Cardiac septum (tissue), 1 donor: ENCODE measurements at regions of chr18 and their contacts with region 1.

Region 1: DNA sequence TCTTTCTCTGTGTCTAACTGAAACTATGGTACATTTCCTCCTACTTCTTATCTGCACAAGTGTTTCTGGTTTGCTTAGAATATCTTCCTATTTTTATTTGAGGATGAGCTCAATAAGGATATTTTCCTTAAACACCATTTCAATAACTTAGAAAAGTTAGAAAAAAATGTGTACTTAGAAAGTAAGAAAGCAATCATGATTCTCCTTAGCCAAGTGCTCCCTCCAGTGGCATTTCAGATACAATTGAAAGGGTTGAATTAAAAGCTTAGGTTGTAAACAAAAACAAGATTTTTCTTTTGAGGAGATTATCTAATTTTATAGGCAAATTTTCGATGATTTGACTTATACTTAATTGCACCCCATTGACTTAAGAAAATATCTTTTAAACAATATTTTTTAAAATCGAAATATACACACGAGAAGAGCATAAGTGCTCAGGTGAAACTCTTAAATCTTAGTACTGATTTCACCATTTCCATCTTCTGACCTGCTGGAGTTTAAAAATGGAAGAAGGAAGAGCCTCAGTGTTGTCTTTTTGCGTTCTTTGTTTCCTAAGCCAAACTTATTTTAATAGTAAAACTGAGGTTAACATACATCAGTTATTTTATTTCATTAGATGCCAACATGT is 26.9 kb downstream of the C18orf63 start:
- DNase-seq: no peak

Region 2: DNA sequence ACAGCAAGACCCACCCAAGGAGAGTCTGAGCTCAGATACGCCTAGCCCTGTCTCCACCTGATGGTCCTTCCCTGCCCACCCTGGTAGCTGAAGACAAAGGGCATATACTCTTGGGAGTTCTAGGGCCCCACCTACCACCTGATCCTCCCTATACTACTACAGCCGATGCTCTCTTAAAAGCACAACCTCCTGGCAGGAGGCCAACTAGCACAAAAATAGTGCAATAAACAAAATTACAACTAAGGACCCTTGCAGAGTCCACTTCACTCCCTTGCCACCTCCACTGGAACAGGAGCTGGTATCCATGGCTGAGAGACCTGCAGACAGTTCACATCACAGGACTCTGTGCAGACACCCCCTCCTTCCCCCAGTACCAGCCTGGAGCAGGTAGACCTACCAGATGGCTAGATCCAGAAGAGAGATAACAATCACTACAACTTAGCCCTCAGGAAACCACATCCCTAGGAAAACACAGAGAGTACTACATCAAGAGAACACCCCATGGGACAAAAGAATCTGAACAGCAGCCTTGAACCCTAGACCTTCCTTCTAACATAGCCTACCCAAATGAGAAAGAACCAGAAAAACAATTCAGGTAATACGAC is 244.8 kb before region 1 on chr18:
- intact Hi-C with region 1: no loop called
- DNase-seq: no peak

Region 3: DNA sequence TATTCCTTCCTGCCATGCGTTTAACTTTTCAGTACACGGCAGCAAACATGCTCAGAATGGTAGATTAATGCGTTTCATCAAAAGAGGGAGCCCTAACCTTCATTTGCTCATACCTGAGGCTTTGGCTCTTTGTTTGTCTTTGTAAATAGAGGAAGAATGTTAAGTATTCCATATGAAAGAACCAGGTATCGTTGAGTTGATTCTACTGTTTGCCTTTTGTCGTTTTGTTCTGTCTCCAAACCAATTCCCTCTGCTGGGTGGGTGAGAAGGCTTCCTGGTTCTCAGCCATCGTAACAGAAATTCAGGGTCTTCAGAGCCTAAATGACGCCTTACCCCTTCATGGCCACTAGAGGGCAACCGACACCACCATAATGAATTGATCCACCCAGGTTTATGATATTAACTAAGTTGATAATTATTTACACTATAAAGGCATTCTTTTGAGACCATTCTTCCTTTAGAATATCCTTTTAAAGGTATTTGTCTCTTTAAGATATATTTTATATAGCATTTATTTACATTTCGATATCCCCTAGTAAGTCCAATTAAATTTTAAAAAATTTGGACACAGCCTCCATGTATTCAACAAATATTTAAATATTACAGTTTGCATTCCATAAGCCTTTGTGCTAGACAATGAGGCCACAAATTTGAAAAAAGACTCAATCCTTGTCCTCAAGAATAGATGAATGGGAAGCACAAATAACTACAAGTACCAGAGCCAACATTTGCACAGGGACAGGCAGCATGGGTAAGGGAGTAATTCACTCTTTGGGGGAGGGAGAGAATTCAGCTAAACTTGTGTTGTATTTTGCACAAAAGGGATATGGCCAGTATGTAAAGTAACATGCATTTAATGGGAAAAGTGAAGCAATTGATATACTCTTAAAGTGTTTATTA is 146.1 kb before region 1 on chr18:
- intact Hi-C with region 1: loop called (anchors 2 kb)
- DNase-seq: no peak

Region 4: DNA sequence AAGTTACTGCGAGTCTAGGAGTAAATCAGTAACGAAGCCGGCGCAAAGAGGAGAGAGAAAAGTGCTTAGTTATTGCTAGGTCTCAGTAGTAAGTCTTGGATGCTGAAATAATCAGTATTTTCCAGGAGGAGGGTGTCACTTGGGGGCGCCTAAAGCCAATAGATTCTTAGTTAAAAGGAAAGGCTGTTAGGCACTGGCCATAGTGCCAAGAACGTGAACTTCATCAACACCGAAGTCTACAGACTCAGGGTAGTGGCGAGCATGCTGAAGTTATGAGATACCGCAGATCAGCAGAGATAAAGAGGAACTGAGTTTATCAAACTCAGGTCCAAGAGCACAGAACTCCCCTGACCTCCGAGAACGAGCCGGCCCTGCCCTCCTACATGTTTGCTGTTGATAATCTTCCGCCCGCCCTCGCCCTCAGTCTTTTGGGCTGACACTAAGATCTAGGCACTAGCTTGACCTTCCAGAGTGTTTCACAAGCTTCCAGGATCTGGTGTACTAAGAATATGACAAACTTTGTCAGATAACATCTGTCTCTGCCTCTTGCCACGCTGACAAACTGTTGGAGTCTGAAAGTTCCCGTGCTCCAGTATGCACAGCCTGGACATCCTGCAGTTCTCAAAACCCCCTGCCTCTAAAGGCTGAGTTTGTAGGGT is 100.0 kb before region 1 on chr18:
- intact Hi-C with region 1: loop called (anchors 2 kb)
- DNase-seq: no peak

Region 5: DNA sequence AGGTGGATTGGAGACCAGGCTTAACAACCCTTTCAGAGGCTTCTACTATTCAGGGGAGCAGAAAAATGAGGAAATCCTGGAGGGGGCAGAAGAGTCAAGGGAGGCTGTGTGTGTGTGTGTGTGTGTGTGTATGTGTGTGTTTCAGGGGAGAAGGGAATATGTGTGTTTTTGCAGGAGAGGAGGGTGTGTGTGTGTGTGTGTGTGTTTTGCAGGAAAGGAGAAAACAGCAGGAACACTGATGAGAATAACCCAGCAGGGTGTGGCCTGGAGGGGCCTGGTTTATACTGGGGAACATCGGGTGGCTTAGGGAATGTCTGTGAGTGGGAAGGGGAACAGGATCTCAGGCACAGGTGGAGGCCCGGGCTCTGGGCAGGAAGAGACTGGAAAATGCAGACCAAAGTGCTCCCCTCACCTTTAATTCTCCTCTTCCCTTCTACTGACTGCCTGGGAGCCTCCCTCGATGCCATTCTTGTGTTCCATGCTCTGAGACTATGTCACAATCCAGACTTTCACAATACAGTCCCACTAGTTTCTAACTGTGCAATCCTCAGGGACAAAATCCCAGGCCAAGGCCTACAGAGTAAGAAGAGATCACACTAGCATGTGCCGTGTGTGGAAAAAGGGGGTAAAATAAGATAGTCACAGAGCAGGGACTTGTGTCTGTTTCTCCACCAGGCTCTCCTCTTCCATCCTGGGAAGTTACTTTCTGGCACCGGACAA is 60.7 kb before region 1 on chr18:
- intact Hi-C with region 1: no loop called
- DNase-seq: no peak

Region 6: GRCh38 chr18:74420481-74420880 is 78.0 kb after region 1 on chr18:
- intact Hi-C with region 1: no loop called
- DNase-seq: no peak